CD4-positive, alpha-beta T cell (primary cell): ENCODE measurements at regions of chr19 and their contacts with region 1.

Region 1: DNA sequence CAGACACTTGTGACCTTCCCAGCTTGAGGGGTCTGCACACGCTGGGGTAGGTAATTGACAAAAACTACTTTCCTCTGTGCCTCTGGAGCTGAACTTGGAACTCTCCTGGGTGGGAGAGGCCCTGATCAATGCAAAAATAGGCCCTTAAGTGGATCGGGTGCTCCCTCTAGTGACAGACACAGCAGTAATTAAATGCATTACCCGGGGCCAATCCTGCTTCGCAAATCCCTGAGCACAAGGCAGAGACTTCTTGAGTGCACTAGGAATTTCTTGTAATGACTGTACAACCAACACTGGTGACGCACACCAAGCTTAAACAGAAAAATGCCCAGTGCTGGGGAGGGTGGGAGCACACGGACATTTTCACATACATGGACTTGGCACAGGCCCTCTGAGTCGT is 10.6 kb upstream of the UBE2S start:
- DNase-seq: peak; percentile 25 to 80 (median 42)
- ATAC-seq: peak; percentile 60
- H3K4me3 ChIP-seq: no peak overlapping the region
- H3K4me3 Mint-ChIP-seq: no peak overlapping the region
- H3K27ac ChIP-seq: no peak overlapping the region
- H3K27ac Mint-ChIP-seq: no peak overlapping the region
- H3K4me1 ChIP-seq: peaks cover 31% of the 10 kb centered on the region
- H3K4me1 Mint-ChIP-seq: peaks cover 24% of the 10 kb centered on the region
- H3K27me3 ChIP-seq: no peaks in the 10 kb centered on the region
- H3K27me3 Mint-ChIP-seq: no peaks in the 10 kb centered on the region
- CTCF ChIP-seq: peak; percentile 79

Region 2: DNA sequence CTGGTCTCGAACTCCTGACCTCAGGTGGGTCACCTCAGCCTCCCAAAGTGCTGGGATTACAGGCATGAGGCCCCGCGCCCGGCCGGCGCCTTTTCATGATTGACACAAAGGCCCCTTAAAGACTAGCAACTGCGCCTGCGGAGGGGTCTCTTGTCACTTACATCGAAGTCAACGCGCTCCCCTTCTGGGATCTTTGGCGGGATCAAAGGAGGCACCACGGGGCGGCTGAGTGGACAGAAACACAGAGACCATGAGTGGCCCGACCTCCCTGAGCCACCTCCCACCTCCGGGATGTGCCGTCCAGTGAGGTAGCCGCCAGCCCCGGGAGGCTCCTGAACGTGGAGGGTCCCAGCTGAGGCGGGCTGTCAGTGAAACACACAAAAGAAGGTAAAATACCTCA is 276.5 kb before region 1 on chr19:
- CTCF ChIA-PET with region 1: interaction called, 7 read pairs
- POLR2A ChIA-PET with region 1: no interaction called
- intact Hi-C with region 1: loop called (anchors 1 kb)
- DNase-seq: no peak
- ATAC-seq: no peak
- H3K4me3 ChIP-seq: no peak overlapping the region
- H3K4me3 Mint-ChIP-seq: no peak overlapping the region
- H3K27ac ChIP-seq: no peak overlapping the region
- H3K27ac Mint-ChIP-seq: no peak overlapping the region
- H3K4me1 ChIP-seq: peaks cover 20% of the 10 kb centered on the region
- H3K4me1 Mint-ChIP-seq: peaks cover 5% of the 10 kb centered on the region
- H3K27me3 ChIP-seq: peaks cover 50 to 58% of the 10 kb centered on the region in 2 experiments
- H3K27me3 Mint-ChIP-seq: peaks cover 59% of the 10 kb centered on the region
- CTCF ChIP-seq: no peak

Region 3: GRCh38 chr19:55289117-55289796 is 128.9 kb before region 1 on chr19:
- CTCF ChIA-PET with region 1: interaction called, 5 read pairs
- POLR2A ChIA-PET with region 1: no interaction called
- intact Hi-C with region 1: loop called in 1 of 2 experiments (anchors 2 kb)
- DNase-seq: no peak
- ATAC-seq: no peak
- H3K4me3 ChIP-seq: no peak overlapping the region
- H3K4me3 Mint-ChIP-seq: no peak overlapping the region
- H3K27ac ChIP-seq: no peak overlapping the region
- H3K27ac Mint-ChIP-seq: no peak overlapping the region
- H3K4me1 ChIP-seq: peaks cover 8% of the 10 kb centered on the region
- H3K4me1 Mint-ChIP-seq: peaks cover 6% of the 10 kb centered on the region
- H3K27me3 ChIP-seq: no peaks in the 10 kb centered on the region
- H3K27me3 Mint-ChIP-seq: no peaks in the 10 kb centered on the region
- CTCF ChIP-seq: no peak

Region 4: GRCh38 chr19:55301459-55302317 is 116.5 kb before region 1 on chr19:
- CTCF ChIA-PET with region 1: no interaction called
- POLR2A ChIA-PET with region 1: no interaction called
- intact Hi-C with region 1: loop called (anchors 1 to 2 kb)
- DNase-seq: peak; percentile 87 to 98 (median 94)
- ATAC-seq: peak; percentile 89
- H3K4me3 ChIP-seq: peak overlapping the region; percentile 37
- H3K4me3 Mint-ChIP-seq: peak overlapping the region; percentile 88
- H3K27ac ChIP-seq: no peak overlapping the region
- H3K27ac Mint-ChIP-seq: peak overlapping the region; percentile 61
- H3K4me1 ChIP-seq: peaks cover 21% of the 10 kb centered on the region
- H3K4me1 Mint-ChIP-seq: peaks cover 14% of the 10 kb centered on the region
- H3K27me3 ChIP-seq: no peaks in the 10 kb centered on the region
- H3K27me3 Mint-ChIP-seq: no peaks in the 10 kb centered on the region
- CTCF ChIP-seq: peak; percentile 95

Region 5: DNA sequence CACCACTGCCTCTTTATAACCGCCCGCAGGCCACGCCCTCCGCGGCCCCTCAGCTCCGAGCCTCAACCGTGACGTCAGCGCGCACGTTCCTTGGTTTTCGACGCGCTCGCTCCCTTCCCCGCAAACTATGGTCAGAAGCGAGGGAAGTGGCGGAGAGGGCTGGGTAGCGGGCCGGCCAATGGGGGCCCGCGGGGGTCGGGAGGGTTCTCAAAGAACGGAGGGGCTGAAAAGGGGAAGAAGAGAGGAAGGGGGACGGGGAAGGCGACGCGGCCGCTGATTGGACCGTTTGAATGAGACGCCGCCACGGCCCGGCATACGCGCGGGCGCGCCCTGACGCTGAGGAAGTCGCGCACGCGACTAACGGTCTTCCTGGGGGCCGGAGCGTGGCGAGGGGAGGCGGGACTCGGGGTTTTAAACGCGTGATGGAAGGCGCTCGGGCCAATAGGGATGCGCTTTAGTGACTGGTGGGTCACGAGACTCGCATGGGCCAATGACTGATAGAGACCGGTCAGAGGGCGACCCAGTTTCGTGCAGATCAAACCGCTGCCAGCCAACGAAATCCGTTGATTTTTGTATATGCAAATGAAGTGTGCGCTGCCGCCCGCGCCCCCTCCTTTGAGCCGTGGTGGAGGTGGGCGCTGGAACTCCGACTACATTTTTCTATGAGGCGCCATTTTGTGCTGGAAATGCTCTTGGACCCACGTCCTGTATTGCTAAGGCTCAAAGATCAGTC is 10.2 kb before region 1 on chr19:
- CTCF ChIA-PET with region 1: no interaction called
- POLR2A ChIA-PET with region 1: interaction called, 13 read pairs
- intact Hi-C with region 1: no loop called
- DNase-seq: peak; percentile 91 to 99 (median 96)
- ATAC-seq: peak; percentile 92
- H3K4me3 ChIP-seq: peak overlapping the region; percentile 61
- H3K4me3 Mint-ChIP-seq: peak overlapping the region; percentile 94
- H3K27ac ChIP-seq: peak overlapping the region; percentile 96 to 100
- H3K27ac Mint-ChIP-seq: peak overlapping the region; percentile 99
- H3K4me1 ChIP-seq: peaks cover 30% of the 10 kb centered on the region
- H3K4me1 Mint-ChIP-seq: peaks cover 29% of the 10 kb centered on the region
- H3K27me3 ChIP-seq: no peaks in the 10 kb centered on the region
- H3K27me3 Mint-ChIP-seq: no peaks in the 10 kb centered on the region
- CTCF ChIP-seq: no peak

Region 6: DNA sequence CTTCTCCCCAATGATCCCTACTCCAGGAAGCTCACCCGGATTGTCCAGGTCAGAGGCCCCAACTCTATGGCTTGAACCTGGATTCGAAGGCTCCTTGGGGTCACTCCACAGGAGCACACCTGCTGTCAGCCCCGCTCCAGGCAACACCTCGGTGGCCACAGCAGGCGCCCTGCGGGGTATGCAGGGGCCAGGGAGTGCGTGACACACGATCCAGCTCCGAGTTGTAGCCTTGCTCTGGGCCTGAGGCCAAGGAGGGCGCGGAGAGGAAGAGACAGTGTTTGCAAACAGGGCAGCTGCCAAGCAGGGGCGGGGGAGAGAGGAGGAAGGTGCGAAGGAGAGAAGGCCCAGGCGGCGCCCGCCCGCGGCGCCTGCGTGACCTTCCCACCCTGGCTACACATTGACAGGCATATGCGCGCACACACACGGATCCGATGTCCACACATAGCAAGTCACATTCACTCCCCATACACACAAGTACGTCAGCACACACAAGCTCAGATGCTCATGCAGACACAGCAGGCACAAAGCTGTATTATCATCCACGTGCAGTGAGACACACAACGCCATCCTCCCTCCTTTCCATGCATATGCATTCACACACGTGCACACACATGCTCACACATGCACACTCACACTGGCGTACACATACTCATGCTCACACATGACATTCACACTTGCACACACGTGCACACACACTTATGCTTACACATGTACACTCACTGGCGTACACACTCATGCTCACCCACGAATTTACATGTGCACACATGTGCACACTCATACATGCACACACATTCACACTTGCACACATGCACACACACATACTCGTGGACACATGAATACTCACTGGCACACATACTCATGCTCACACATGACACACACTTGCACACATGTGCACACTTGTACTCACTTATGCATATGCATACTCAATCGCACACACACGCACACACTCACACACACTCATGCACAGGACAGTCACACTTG is 108.3 kb after region 1 on chr19:
- CTCF ChIA-PET with region 1: no interaction called
- POLR2A ChIA-PET with region 1: no interaction called
- intact Hi-C with region 1: no loop called
- DNase-seq: peak in 5 of 14 experiments; percentile 8 to 27 (median 13)
- ATAC-seq: peak; percentile 74
- H3K4me3 ChIP-seq: no peak overlapping the region
- H3K4me3 Mint-ChIP-seq: no peak overlapping the region
- H3K27ac ChIP-seq: no peak overlapping the region
- H3K27ac Mint-ChIP-seq: no peak overlapping the region
- H3K4me1 ChIP-seq: no peaks in the 10 kb centered on the region
- H3K4me1 Mint-ChIP-seq: no peaks in the 10 kb centered on the region
- H3K27me3 ChIP-seq: no peaks in the 10 kb centered on the region
- H3K27me3 Mint-ChIP-seq: no peaks in the 10 kb centered on the region
- CTCF ChIP-seq: no peak